HepG2 (cell line): ENCODE measurements at regions of chr4 and their contacts with region 1.

Region 1: DNA sequence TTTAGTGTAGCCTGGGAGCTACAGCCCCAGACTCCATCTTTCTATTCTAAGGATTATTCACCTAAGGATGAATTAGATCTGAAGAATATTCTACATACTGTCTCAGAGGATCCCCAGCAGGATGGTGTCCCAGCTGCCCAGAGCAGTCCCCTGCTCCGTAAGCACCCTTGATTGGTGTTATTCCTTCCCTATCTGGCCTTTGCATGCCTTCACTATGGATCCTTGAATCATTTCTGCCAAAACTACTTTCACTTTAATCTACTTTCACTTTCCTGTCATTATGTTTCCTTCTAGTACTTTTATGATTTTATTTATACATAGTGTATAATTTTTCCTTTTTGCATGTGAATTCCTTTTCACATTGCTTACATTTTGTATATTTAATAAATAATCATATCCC is 39.2 kb downstream of the ARHGAP24 start:
- DNase-seq: no peak
- ATAC-seq: no peak
- H3K4me3 ChIP-seq: no peak overlapping the region
- H3K27ac ChIP-seq: no peak overlapping the region
- H3K4me1 ChIP-seq: peaks cover 8% of the 10 kb centered on the region
- H3K27me3 ChIP-seq: no peaks in the 10 kb centered on the region
- CTCF ChIP-seq: no peak
- EP300 ChIP-seq: no peak
- POLR2A ChIP-seq: no peak
- RAD21 ChIP-seq: no peak

Region 2: GRCh38 chr4:85474818-85475630 is 39.1 kb before region 1 on chr4 and contains the start of gene ARHGAP24:
- CTCF ChIA-PET with region 1: no interaction called
- POLR2A ChIA-PET with region 1: no interaction called
- in situ Hi-C with region 1: no loop called
- intact Hi-C with region 1: loop called (anchors 5 kb)
- DNase-seq: peak; percentile 95
- ATAC-seq: peak; percentile 99
- H3K4me3 ChIP-seq: peak within 1 kb of the TSS; percentile 47 to 65 (median 50); a peak in 5 of 6 replicates
- H3K27ac ChIP-seq: no peak within 1 kb of the TSS
- H3K4me1 ChIP-seq: peaks cover 11% of the 10 kb centered on the region
- H3K27me3 ChIP-seq: peaks cover 0 to 12% of the 10 kb centered on the region in 2 experiments; a peak in 1 of 5 replicates
- CTCF ChIP-seq: no peak
- EP300 ChIP-seq: peak; percentile 50 to 72; a peak in 3 of 4 replicates
- POLR2A ChIP-seq: no peak
- RAD21 ChIP-seq: 0 out of 2 replicates have a peak, but pooled peaks have one; percentile 16
- total RNA-seq, gene ARHGAP24: 0.22 and 0.55 TPM in 2 replicates

Region 3: DNA sequence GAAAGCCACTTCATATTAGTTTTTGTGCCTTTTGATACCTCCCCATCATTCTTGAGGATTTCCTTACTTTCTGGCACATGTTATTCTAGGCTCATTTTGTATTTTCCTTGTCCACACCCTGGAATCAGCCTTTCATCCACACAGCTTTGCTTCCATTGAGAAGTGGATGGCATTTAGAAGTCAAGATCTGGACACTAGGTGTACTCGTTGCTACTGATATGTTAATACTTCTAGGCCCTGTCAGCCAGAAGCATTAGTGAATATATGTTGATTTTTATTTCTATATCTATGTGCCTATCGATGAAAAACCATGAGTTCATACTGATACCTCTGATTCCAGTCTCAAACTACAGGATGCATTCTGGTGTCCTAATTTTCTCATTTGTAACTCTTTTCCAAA is 34.0 kb after region 1 on chr4:
- CTCF ChIA-PET with region 1: no interaction called
- POLR2A ChIA-PET with region 1: no interaction called
- in situ Hi-C with region 1: no loop called
- intact Hi-C with region 1: no loop called
- DNase-seq: no peak
- ATAC-seq: no peak
- H3K4me3 ChIP-seq: no peak overlapping the region
- H3K27ac ChIP-seq: no peak overlapping the region
- H3K4me1 ChIP-seq: no peaks in the 10 kb centered on the region
- H3K27me3 ChIP-seq: no peaks in the 10 kb centered on the region
- CTCF ChIP-seq: no peak
- EP300 ChIP-seq: no peak
- POLR2A ChIP-seq: no peak
- RAD21 ChIP-seq: no peak